Activated T-helper 1 cell treated with anti-CD3 and anti-CD28 coated beads, Interleukin-12 subunit alpha, Interleukin-12 subunit beta, Interleukin-2, Interleukin-4 antibody, amounts not matched to agents 30 ng/mL and 10 ng/mL and 1 ng/mL, durations not matched to agents 14 hours and 24 hours and 36 hours (primary cell): ENCODE measurements at regions of chr2 and their contacts with region 1.

Region 1: DNA sequence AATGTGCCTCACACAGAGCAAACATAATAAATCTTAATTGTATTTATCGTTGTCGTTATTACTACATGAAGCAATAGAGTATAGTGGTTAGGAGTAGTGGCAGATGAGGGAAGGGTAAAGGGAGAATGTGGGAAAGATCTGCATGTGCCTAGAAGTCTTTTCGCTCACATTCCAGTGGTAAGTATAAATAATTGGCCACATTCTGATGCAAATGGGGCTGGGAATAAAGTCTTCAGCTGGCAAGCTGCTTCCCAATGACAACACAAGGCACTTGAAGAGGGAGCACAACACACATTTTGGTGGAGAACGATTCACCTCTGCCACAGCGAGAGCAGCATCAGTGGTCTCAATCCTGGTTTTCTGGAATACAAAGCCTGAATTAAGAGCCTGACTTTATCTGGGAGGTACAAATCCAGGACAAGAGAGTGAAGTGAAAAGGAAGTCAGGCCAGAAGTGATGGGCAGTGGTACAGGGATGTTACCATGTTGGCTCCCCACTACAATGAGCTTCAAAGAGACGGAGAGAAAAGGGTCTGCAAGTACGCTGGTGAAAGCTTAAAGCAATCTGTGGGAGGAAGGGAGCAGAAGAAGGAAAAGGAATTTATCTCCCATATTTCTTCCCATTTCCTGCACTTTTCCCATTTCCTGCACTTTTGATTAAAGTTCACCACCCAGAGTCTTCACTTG is 112.3 kb downstream of the ARHGAP15 start:
- DNase-seq: no peak
- H3K4me3 Mint-ChIP-seq: no peak overlapping the region
- H3K27ac Mint-ChIP-seq: peak overlapping the region; percentile 14
- H3K4me1 Mint-ChIP-seq: peaks cover 14% of the 10 kb centered on the region
- H3K27me3 Mint-ChIP-seq: no peaks in the 10 kb centered on the region

Region 2: DNA sequence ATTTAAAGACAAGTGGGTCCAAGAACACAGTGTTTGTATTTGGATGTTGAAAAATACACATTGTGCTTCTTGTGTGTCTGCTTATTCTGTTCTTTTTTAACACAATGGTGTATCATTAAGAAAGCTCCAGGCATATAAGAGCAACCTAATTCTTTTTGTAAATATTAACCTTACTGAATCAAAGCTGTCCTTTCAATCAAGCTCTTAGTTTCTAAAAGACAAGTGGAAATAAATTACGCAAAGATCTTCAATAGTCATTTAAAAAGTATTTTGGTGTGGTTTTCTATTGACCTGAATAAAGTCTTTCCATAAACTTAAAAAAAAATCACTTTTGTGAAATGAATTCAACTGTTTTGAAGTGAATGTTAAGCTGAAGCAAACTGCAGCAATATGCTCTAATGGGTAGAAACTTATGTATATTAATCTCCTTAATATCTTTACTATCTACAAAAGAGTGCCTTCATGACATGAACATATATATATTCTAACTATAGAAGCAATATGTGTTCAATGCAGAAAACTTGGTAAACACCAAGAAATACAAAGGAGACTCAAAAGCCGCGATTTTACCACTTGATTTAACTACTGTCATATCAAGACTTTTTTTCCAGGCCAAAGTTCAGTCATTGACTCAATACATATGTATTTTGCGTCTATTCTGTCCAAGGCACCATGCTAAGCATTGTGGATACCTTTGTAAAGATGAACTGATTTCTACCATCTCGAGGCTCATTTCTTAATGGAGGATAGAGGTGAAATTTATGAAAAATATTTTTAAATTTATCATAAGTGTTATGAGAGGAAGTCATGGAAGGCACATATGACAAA is 14.6 kb before region 1 on chr2:
- intact Hi-C with region 1: loop called (anchors 2 kb)
- DNase-seq: no peak
- H3K4me3 Mint-ChIP-seq: no peak overlapping the region
- H3K27ac Mint-ChIP-seq: peak overlapping the region; percentile 56
- H3K4me1 Mint-ChIP-seq: peaks cover 53% of the 10 kb centered on the region
- H3K27me3 Mint-ChIP-seq: no peaks in the 10 kb centered on the region

Region 3: GRCh38 chr2:143254110-143254509 is 12.6 kb after region 1 on chr2:
- intact Hi-C with region 1: loop called (anchors 2 kb)
- DNase-seq: no peak
- H3K4me3 Mint-ChIP-seq: peak overlapping the region; percentile 47
- H3K27ac Mint-ChIP-seq: peak overlapping the region; percentile 81
- H3K4me1 Mint-ChIP-seq: peaks cover 78% of the 10 kb centered on the region
- H3K27me3 Mint-ChIP-seq: no peaks in the 10 kb centered on the region

Region 4: GRCh38 chr2:143503280-143503679 is 261.7 kb after region 1 on chr2:
- intact Hi-C with region 1: no loop called
- DNase-seq: no peak
- H3K4me3 Mint-ChIP-seq: no peak overlapping the region
- H3K27ac Mint-ChIP-seq: no peak overlapping the region
- H3K4me1 Mint-ChIP-seq: peaks cover under 1% of the 10 kb centered on the region
- H3K27me3 Mint-ChIP-seq: no peaks in the 10 kb centered on the region